Dendritic cell treated with granulocyte-macrophage colony-stimulating factor and Interleukin-4, amounts not matched to agents 40 ng/mL and 50 ng/mL, for 4 days (primary cell): ENCODE measurements at regions of chr1 and their contacts with region 1.

Region 1: GRCh38 chr1:8671306-8671917 is 146.0 kb downstream of the RERE start:
- H3K4me3 Mint-ChIP-seq: no peak overlapping the region
- H3K27ac Mint-ChIP-seq: no peak overlapping the region
- H3K4me1 Mint-ChIP-seq: peaks cover 19% of the 10 kb centered on the region
- H3K27me3 Mint-ChIP-seq: no peaks in the 10 kb centered on the region

Region 2: DNA sequence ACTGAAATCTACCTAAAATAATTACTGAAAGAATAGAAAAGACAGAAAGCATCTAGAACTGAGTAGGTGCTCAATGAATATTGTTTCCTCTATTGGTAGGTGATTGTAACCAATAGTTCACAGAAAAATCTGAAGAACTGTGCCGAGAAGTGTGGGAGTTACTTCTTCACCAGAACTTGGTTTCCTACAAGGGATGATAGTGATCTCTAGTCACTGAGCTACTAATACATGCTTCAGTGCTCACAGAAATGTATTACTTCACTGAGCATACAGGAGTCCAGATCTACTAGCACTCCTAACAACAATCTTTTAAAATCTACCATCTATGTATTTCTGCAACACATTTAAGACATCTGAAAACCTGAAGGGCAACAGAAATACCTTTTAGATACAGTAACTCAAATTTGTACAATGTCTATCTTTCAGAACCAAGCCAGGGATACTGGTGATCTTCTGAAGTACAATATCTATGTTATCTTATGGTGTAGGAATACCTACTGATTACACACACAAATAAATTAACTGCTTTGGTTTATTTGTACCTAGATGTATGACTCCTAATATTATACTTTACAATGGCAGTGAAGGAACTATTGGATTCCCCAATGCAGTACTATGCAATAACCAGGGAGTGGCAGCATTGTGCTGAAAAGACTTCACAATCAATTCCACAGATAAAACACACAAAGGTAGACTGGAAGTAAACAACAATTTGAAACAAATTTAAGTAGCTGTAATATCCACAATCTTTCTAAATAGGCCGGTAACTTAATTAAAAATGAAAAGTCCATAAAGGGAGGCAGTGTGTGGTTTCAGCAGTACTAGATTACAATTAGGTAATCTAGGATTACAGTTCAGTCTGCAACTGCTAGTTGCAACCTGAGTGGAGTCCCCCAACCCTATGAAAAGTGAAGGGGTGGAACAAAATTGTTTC is 110.5 kb before region 1 on chr1:
- intact Hi-C with region 1: loop called (anchors 2 kb)
- H3K4me3 Mint-ChIP-seq: no peak overlapping the region
- H3K27ac Mint-ChIP-seq: no peak overlapping the region
- H3K4me1 Mint-ChIP-seq: peaks cover 11% of the 10 kb centered on the region
- H3K27me3 Mint-ChIP-seq: no peaks in the 10 kb centered on the region

Region 3: GRCh38 chr1:8574999-8575398 is 96.4 kb before region 1 on chr1:
- intact Hi-C with region 1: loop called (anchors 5 kb)
- H3K4me3 Mint-ChIP-seq: no peak overlapping the region
- H3K27ac Mint-ChIP-seq: no peak overlapping the region
- H3K4me1 Mint-ChIP-seq: peaks cover 9% of the 10 kb centered on the region
- H3K27me3 Mint-ChIP-seq: no peaks in the 10 kb centered on the region

Region 4: DNA sequence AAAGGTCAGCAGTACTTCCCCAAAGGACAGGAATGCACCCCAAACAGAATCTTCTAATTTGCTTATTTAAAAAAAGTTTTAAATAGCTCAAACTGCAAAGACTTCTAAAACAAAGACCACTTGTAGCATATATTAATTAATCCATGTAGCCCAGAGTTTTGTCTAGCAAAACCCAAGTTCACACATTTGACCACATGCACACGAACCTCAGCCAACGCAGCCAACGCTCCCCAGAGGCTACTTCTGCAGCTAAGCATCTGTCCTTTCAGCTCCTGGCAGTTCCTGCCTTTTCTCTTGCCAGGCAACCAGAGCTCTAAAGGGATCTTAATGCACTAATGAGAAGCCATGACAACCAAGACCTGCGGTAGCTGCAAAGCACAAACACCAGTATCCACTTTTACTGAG is 56.4 kb after region 1 on chr1:
- intact Hi-C with region 1: loop called (anchors 5 kb)
- H3K4me3 Mint-ChIP-seq: no peak overlapping the region
- H3K27ac Mint-ChIP-seq: no peak overlapping the region
- H3K4me1 Mint-ChIP-seq: peaks cover 4% of the 10 kb centered on the region
- H3K27me3 Mint-ChIP-seq: no peaks in the 10 kb centered on the region